CD4-positive, alpha-beta T cell (primary cell): ENCODE measurements at regions of chr6 and their contacts with region 1.

Region 1: GRCh38 chr6:75284632-75285286 is at the start of gene TMEM30A:
- DNase-seq: peak; percentile 90 to 100 (median 95)
- ATAC-seq: peak; percentile 96
- H3K4me3 ChIP-seq: peak within 1 kb of the TSS; percentile 78
- H3K4me3 Mint-ChIP-seq: no peak within 1 kb of the TSS
- H3K27ac ChIP-seq: peak within 1 kb of the TSS; percentile 76 to 85
- H3K27ac Mint-ChIP-seq: no peak within 1 kb of the TSS
- H3K4me1 ChIP-seq: peaks cover 9% of the 10 kb centered on the region
- H3K4me1 Mint-ChIP-seq: peaks cover 47% of the 10 kb centered on the region
- H3K27me3 ChIP-seq: no peaks in the 10 kb centered on the region
- H3K27me3 Mint-ChIP-seq: no peaks in the 10 kb centered on the region
- CTCF ChIP-seq: no peak
- total RNA-seq, gene TMEM30A: 29.8 to 33.2 TPM

Region 2: GRCh38 chr6:75243333-75244062 is 41.3 kb before region 1 on chr6 and contains the start of gene COX7A2:
- CTCF ChIA-PET with region 1: interaction called, 4 read pairs
- POLR2A ChIA-PET with region 1: interaction called, 61 read pairs
- intact Hi-C with region 1: loop called (anchors 1 to 2 kb)
- DNase-seq: peak; percentile 73 to 96 (median 78)
- ATAC-seq: peak; percentile 95
- H3K4me3 ChIP-seq: peak within 1 kb of the TSS; percentile 88
- H3K4me3 Mint-ChIP-seq: peak within 1 kb of the TSS; percentile 99
- H3K27ac ChIP-seq: peak within 1 kb of the TSS; percentile 87 to 97
- H3K27ac Mint-ChIP-seq: peak within 1 kb of the TSS; percentile 95
- H3K4me1 ChIP-seq: peaks cover 24% of the 10 kb centered on the region
- H3K4me1 Mint-ChIP-seq: peaks cover 40% of the 10 kb centered on the region
- H3K27me3 ChIP-seq: no peaks in the 10 kb centered on the region
- H3K27me3 Mint-ChIP-seq: peaks cover 17% of the 10 kb centered on the region
- CTCF ChIP-seq: no peak
- total RNA-seq, gene COX7A2: 189 to 195 TPM